ENCODE measurements at regions of chr18 and their contacts with region 1.

Region 1: GRCh38 chr18:3816610-3817363 is 366.8 kb downstream of the TGIF1 start:
- DNase-seq: peak; percentile 64
- H3K4me3 ChIP-seq: no peak overlapping the region
- H3K27ac ChIP-seq: no peak overlapping the region
- H3K4me1 ChIP-seq: peaks cover 6% of the 10 kb centered on the region
- H3K27me3 ChIP-seq: no peaks in the 10 kb centered on the region
- CTCF ChIP-seq: no peak
- POLR2A ChIP-seq: no peak

Region 2: GRCh38 chr18:3758531-3758930 is 58.3 kb before region 1 on chr18:
- CTCF ChIA-PET with region 1: no interaction called
- POLR2A ChIA-PET with region 1: no interaction called
- dilution Hi-C with region 1: no loop called
- intact Hi-C with region 1: no loop called
- DNase-seq: peak; percentile 21
- H3K4me3 ChIP-seq: no peak overlapping the region
- H3K27ac ChIP-seq: no peak overlapping the region
- H3K4me1 ChIP-seq: no peaks in the 10 kb centered on the region
- H3K27me3 ChIP-seq: no peaks in the 10 kb centered on the region
- CTCF ChIP-seq: no peak
- POLR2A ChIP-seq: no peak

Region 3: DNA sequence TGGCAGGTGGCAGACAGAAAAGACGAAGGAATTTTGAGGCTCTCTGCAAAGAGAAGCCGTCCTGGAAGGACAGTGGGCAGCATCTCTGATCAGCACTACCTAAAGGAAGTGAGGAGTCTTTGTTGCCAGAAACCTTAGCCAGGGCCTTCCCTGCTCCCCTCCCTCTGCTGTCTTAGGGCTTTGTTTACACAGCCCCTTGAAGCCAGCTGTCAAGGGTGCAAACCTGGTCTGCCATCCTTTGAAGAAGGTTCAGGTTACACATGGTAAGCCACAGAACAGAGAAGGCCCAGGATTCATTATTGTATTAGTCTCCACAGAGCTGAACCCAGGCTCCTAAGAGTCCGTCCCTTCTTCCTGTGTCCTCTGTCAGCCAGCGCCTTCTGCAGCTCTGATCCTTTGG is 10.1 kb before region 1 on chr18:
- CTCF ChIA-PET with region 1: interaction called, 10 read pairs
- POLR2A ChIA-PET with region 1: no interaction called
- dilution Hi-C with region 1: no loop called
- intact Hi-C with region 1: no loop called
- DNase-seq: no peak
- H3K4me3 ChIP-seq: no peak overlapping the region
- H3K27ac ChIP-seq: no peak overlapping the region
- H3K4me1 ChIP-seq: no peaks in the 10 kb centered on the region
- H3K27me3 ChIP-seq: peaks cover 0 to 3% of the 10 kb centered on the region in 2 experiments
- CTCF ChIP-seq: no peak
- POLR2A ChIP-seq: no peak

Measured in endothelial cell of umbilical vein (primary cell).